ENCODE measurements at regions of chr12 and their contacts with region 1.

Region 1: GRCh38 chr12:53071591-53072551 is 7.3 kb downstream of the SPRYD3 start:
- DNase-seq: no peak
- H3K4me3 ChIP-seq: no peak overlapping the region
- H3K27ac ChIP-seq: no peak overlapping the region
- H3K4me1 ChIP-seq: peaks cover under 1% of the 10 kb centered on the region; the same call in 1 of the 2 replicates
- H3K27me3 ChIP-seq: no peaks in the 10 kb centered on the region
- CTCF ChIP-seq: no peak

Region 2: DNA sequence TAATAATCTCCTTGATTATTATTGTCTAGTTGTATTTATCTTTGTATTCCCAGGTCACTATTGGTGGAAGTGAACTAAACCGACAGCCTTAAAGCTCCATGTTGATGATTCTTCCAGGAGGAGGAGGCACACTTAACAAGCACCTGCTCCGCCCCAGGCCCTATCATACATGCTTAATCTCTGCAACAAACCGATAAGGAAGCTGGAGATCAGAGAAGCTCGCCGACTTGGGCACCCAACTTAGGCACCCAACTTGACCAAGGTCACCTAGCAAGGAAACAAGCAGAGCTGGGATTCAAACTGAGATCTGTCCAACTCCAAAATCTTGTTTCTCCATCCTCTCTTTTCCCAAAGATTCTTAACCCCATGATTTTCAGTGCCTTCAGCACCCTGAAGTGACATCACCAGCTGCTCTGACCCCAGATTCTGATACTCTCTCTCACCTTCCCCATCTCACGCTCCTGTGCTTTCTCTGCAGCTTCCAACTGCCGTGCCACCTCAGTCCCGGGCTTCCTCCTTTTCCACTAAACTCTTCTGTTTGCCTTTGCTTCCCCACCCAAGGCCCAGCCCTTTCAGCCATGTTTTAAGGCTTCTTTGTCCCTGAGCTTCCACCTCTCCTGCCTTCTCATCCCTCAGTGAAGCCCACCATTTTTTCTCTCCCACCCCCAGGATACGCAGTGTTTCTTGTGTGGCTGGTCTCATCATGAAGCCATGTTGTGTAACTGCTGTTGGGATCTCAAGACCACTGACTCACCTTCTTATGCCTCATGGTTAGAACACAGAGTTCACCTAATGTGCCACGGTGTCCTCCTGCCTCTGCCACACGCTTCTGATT is 129.6 kb before region 1 on chr12:
- CTCF ChIA-PET with region 1: interaction called, 19 read pairs
- POLR2A ChIA-PET with region 1: no interaction called
- intact Hi-C with region 1: no loop called
- DNase-seq: no peak
- H3K4me3 ChIP-seq: no peak overlapping the region
- H3K27ac ChIP-seq: peak overlapping the region; percentile 100
- H3K4me1 ChIP-seq: peaks cover 48% of the 10 kb centered on the region
- H3K27me3 ChIP-seq: no peaks in the 10 kb centered on the region
- CTCF ChIP-seq: no peak

Measured in PC-9 (cell line).